Mammary epithelial cell (primary cell): ENCODE measurements at regions of chr3 and their contacts with region 1.

Region 1: GRCh38 chr3:101685870-101686412 is 577 bp downstream of the RPL24 start:
- DNase-seq: no peak
- H3K4me3 ChIP-seq: peak overlapping the region; percentile 59 to 96 (median 78)
- H3K27ac ChIP-seq: peak overlapping the region; percentile 93
- H3K4me1 ChIP-seq: peaks cover 22% of the 10 kb centered on the region
- H3K27me3 ChIP-seq: no peaks in the 10 kb centered on the region
- CTCF ChIP-seq: no peak

Region 2: DNA sequence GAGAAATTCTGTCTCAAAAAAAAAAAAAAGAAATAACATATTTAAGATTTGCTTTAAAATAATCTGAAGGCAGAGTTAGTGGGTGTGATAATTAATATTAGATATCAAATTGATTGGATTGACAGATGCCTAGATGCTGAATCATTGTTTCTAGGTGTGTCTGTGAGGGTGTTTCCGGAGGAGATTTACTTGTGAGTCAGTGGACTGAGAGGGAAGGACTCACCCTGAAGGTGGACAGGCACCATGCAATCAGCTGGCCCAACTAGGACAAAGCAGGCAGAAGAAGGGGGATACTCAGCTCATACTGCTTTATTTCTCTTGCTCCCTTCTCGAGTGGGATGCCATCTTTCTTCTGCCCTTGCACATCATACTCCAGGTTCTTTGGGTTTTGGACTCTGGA is 17.2 kb after region 1 on chr3:
- CTCF ChIA-PET with region 1: no interaction called
- dilution Hi-C with region 1: no loop called
- in situ Hi-C with region 1: no loop called
- intact Hi-C with region 1: loop called (anchors 2 kb)
- DNase-seq: peak; percentile 80
- H3K4me3 ChIP-seq: no peak overlapping the region
- H3K27ac ChIP-seq: peak overlapping the region; percentile 66
- H3K4me1 ChIP-seq: peaks cover 14% of the 10 kb centered on the region
- H3K27me3 ChIP-seq: no peaks in the 10 kb centered on the region
- CTCF ChIP-seq: no peak

Region 3: GRCh38 chr3:101724329-101725193 is 38.6 kb after region 1 on chr3 and contains the start of gene CEP97:
- CTCF ChIA-PET with region 1: no interaction called
- dilution Hi-C with region 1: no loop called
- in situ Hi-C with region 1: no loop called
- intact Hi-C with region 1: loop called (anchors 5 kb)
- DNase-seq: peak; percentile 89
- H3K4me3 ChIP-seq: peak within 1 kb of the TSS; percentile 68 to 99 (median 85)
- H3K27ac ChIP-seq: peak within 1 kb of the TSS; percentile 56
- H3K4me1 ChIP-seq: peaks cover 28% of the 10 kb centered on the region
- H3K27me3 ChIP-seq: no peaks in the 10 kb centered on the region
- CTCF ChIP-seq: no peak
- total RNA-seq, gene CEP97: 15.7 to 15.9 TPM

Region 4: GRCh38 chr3:101779047-101779821 is 93.3 kb after region 1 on chr3 and contains the start of gene NXPE3:
- CTCF ChIA-PET with region 1: interaction called, 11 read pairs
- dilution Hi-C with region 1: no loop called
- in situ Hi-C with region 1: no loop called
- intact Hi-C with region 1: no loop called
- DNase-seq: peak; percentile 81
- H3K4me3 ChIP-seq: peak within 1 kb of the TSS; percentile 58 to 88 (median 65)
- H3K27ac ChIP-seq: peak within 1 kb of the TSS; percentile 37
- H3K4me1 ChIP-seq: peaks cover 23% of the 10 kb centered on the region
- H3K27me3 ChIP-seq: no peaks in the 10 kb centered on the region
- CTCF ChIP-seq: no peak
- total RNA-seq, gene NXPE3: 19.4 to 21.5 TPM